Panc1 (cell line): ENCODE measurements at regions of chr21 and their contacts with region 1.

Region 1: GRCh38 chr21:39387461-39388037 is 38.7 kb upstream of the HMGN1 start:
- DNase-seq: peak; percentile 33
- ATAC-seq: peak; percentile 80
- H3K4me3 ChIP-seq: peak overlapping the region; percentile 44 to 65
- H3K27ac ChIP-seq: peak overlapping the region; percentile 89
- H3K4me1 ChIP-seq: peaks cover 19% of the 10 kb centered on the region
- H3K27me3 ChIP-seq: no peaks in the 10 kb centered on the region
- CTCF ChIP-seq: no peak

Region 2: DNA sequence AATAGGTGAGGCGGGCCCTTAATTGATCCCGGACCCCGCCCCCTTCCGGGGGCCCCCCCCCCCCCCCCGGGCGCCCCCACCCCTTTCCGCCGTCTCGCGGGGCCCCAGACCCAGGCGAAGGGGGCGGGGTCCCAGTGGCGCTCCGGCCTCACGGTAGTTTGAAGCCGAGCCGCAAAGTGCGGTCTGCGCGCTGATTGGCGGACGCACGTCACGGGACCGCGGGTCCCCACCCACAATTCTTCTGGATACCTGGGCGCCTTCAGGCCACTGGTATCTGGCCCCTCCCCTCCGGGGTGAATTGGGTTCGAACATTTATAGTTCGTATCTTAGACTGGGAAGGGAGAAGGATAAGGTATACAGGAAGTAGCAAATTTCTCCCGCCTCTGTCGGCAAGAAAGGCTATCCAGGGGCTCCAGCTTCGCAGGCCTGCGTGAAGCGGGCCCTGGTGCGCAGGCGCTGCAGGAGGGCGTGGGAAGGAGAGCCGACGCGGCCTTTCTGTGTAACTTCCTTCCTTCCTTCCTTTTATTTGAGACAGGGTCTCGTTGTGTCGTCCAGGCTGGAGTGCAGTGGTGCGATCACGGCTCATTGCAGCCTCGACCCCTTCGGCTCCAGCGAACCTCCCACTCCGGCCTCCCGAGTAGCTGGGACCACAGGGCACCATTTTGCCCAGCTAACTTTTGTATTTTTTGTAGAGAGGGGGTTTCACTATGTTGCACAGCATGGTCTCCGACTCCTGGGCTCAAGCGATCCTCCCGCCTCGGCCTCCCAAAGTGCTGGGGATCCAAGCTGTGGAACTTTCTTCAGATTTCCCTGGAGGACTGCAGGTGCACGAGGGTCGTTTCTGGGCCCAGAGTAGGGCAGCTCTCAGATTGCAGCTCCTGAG is 38.1 kb before region 1 on chr21:
- CTCF ChIA-PET with region 1: interaction called, 5 read pairs
- POLR2A ChIA-PET with region 1: interaction called, 14 read pairs
- in situ Hi-C with region 1: no loop called
- intact Hi-C with region 1: no loop called
- DNase-seq: peak; percentile 71
- ATAC-seq: peak; percentile 92
- H3K4me3 ChIP-seq: peak overlapping the region; percentile 53 to 79
- H3K27ac ChIP-seq: peak overlapping the region; percentile 82
- H3K4me1 ChIP-seq: peaks cover 9% of the 10 kb centered on the region
- H3K27me3 ChIP-seq: no peaks in the 10 kb centered on the region
- CTCF ChIP-seq: no peak

Region 3: GRCh38 chr21:39397646-39398385 is 10.3 kb after region 1 on chr21:
- CTCF ChIA-PET with region 1: no interaction called
- POLR2A ChIA-PET with region 1: no interaction called
- in situ Hi-C with region 1: no loop called
- intact Hi-C with region 1: no loop called
- DNase-seq: no peak
- ATAC-seq: no peak
- H3K4me3 ChIP-seq: no peak overlapping the region
- H3K27ac ChIP-seq: no peak overlapping the region
- H3K4me1 ChIP-seq: no peaks in the 10 kb centered on the region
- H3K27me3 ChIP-seq: no peaks in the 10 kb centered on the region
- CTCF ChIP-seq: no peak

Region 4: DNA sequence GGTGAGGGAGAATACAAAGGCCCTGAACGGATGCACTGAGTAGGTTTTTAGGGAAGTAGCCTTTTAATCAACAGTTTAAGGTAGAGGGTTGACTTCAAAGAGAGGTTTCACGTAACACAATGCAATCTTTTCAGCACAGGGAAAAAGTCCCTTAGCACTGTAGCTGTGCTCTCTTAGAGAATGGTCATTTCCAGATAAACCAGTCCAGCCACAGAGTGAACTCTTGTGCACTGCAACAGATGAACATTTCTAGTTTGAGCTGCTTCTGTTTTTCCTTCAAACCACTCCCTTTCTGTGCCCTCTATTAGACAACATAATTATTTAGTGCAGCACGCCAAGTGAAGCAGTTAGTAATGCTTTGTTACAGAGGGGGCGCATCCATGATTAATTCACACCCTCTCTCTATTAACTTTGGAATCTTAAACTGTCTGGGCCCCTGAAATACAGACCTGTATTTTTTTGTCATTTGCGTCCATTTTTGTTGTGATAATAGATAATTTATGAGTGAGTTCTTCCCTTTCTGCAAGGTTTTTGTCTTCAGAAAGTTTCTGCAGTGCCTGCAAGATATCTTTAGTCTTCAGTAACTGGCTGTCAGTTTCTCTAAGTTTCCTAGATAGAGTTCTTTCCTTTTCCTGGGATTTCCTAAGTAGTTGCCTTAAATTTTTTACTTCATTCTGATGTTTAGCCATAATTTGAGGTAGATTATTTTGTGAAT is 35.1 kb after region 1 on chr21:
- CTCF ChIA-PET with region 1: no interaction called
- POLR2A ChIA-PET with region 1: interaction called, 13 read pairs
- in situ Hi-C with region 1: no loop called
- intact Hi-C with region 1: no loop called
- DNase-seq: no peak
- ATAC-seq: no peak
- H3K4me3 ChIP-seq: no peak overlapping the region
- H3K27ac ChIP-seq: no peak overlapping the region
- H3K4me1 ChIP-seq: no peaks in the 10 kb centered on the region
- H3K27me3 ChIP-seq: no peaks in the 10 kb centered on the region
- CTCF ChIP-seq: no peak

Region 5: DNA sequence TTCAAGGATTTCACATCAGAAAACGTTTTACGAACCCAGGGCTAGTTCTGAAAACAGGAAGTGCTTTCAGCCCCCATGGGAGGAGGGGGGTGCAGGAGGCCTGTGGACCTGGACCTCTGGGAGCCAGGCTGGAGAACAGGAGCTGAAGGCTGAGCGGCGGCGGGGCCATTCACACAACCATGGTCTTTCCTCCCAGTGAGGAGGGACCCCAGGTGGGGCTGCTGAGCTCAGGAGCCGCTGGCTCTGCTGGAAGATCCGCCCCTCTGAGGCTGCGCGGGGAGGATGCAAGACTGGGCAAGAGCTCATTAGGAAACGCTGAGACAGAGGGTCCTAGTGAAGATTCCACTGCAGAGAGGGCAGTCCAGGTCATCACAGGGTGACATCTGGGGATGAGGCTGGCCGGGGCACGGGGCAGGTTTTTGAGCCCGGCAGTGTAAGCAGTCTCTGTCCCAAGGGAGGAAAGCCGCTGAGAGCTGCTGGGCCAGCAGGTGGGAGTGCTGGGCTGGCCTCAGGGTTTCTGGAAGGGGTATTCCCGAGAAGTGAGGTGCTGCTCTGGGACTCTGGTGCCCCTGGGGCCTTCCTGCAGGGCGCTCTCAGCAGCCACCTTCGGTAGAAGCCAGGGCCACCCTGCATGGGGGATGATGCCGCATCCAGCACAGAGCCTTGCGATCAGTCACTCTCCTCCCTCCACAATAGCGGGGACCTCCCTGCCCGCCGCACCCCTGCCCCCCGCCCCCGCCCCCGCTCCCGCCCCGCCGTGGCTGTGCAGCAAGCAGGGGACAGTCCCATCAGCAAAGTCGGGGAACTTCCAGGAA is 1981.8 kb after region 1 on chr21:
- CTCF ChIA-PET with region 1: interaction called, 13 read pairs
- POLR2A ChIA-PET with region 1: no interaction called
- in situ Hi-C with region 1: no loop called
- intact Hi-C with region 1: no loop called
- DNase-seq: no peak
- ATAC-seq: peak; percentile 68
- H3K4me3 ChIP-seq: peak overlapping the region; percentile 70 to 92
- H3K27ac ChIP-seq: peak overlapping the region; percentile 73; the same call in 1 of the 2 replicates
- H3K4me1 ChIP-seq: no peaks in the 10 kb centered on the region
- H3K27me3 ChIP-seq: no peaks in the 10 kb centered on the region
- CTCF ChIP-seq: 0 out of 2 replicates have a peak, but pooled peaks have one; percentile 35